ENCODE measurements at regions of chr3 and their contacts with region 1.

Region 1: GRCh38 chr3:179071550-179072397 is at the start of gene ZMAT3:
- DNase-seq: peak; percentile 86 to 95 (median 95)
- H3K4me3 ChIP-seq: peak within 1 kb of the TSS; percentile 69 to 89 (median 76)
- H3K27ac ChIP-seq: peak within 1 kb of the TSS in 1 of 2 experiments; percentile 79
- H3K4me1 ChIP-seq: peaks cover 9 to 33% (median 26%) of the 10 kb centered on the region in 4 experiments
- H3K27me3 ChIP-seq: no peaks in the 10 kb centered on the region

Region 2: DNA sequence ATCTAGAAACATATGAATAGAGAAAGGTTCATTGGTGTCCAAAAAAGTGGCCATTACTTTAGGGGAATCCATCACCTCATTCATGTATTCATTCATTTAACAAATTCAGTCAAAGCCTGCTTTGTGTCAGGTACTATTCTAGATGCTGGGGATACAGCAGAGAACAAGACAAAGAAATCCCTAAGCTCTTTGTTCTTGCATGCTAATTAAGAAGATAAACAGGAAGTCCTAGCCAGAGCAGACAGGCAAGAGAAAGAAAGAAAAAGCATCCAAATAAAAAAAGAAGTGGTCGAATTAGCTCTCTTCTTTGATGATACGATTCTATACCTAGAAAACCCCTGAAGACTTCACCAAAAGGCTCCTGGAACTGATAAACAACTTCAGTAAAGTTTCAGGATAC is 12.2 kb after region 1 on chr3:
- CTCF ChIA-PET with region 1: interaction called, 10 read pairs
- POLR2A ChIA-PET with region 1: no interaction called
- DNase-seq: no peak
- H3K4me3 ChIP-seq: no peak overlapping the region
- H3K27ac ChIP-seq: no peak overlapping the region
- H3K4me1 ChIP-seq: no peaks in the 10 kb centered on the region
- H3K27me3 ChIP-seq: no peaks in the 10 kb centered on the region

Region 3: GRCh38 chr3:179309225-179310078 is 237.7 kb after region 1 on chr3:
- CTCF ChIA-PET with region 1: interaction called, 17 read pairs
- POLR2A ChIA-PET with region 1: no interaction called
- DNase-seq: no peak
- H3K4me3 ChIP-seq: no peak overlapping the region
- H3K27ac ChIP-seq: no peak overlapping the region
- H3K4me1 ChIP-seq: no peaks in the 10 kb centered on the region
- H3K27me3 ChIP-seq: no peaks in the 10 kb centered on the region